ENCODE measurements at regions of chr1 and their contacts with region 1.

Region 1: DNA sequence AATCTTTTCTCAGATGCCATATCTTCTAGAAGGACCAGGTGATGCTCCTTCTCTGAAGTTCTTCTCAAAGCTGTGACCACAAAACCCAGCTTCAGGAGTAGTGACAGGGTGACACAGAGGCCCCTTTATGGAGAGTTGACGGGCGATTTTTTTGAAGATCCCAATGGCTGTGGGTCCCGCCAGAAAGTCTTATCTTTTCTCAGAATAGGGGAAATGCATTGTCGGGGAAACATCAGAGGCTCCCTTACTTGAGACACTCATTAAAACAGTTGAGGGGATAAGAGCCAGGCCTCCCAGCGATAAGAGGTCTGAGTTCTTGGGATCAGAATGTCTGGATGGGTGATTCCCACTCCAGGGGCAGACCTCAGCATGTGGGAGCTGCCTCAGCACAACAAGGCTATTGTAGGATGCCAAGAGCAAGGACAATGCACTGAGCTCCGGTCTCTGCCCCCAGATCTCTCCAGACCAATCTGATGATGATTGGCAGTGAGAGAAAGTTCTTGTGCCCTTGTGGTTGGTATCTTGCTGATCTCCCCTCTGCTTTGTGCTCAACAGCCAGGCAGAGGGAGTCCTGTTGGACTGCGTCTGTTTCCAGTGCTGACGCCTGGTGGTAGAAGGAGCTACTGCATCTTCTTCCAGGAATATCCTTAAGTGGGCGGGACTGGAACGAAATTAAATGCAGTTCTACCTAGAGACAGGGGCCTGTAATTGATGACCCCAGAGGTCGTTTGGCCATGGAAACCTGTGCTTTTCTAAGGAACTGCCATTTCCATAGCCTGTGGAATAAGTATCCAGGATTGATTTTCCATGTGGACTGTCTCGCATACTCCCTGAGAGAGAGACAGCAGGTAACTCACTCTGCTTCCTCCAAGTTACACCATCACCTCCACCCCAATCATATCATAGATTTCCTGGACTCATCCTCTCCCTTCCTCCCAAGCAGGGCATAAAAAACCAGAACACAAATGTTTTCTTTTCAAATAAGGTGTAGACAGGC is 6.8 kb upstream of the ACKR1 start:
- DNase-seq: peak; percentile 76
- ATAC-seq: peak; percentile 86
- H3K4me3 Mint-ChIP-seq: no peak overlapping the region
- H3K27ac Mint-ChIP-seq: no peak overlapping the region
- H3K4me1 Mint-ChIP-seq: peaks cover 16% of the 10 kb centered on the region
- H3K27me3 Mint-ChIP-seq: peaks cover 30% of the 10 kb centered on the region
- CTCF ChIP-seq: peak; percentile 80

Region 2: GRCh38 chr1:159161001-159161718 is 36.7 kb before region 1 on chr1:
- CTCF ChIA-PET with region 1: interaction called, 34 read pairs
- POLR2A ChIA-PET with region 1: no interaction called
- intact Hi-C with region 1: loop called (anchors 5 kb)
- DNase-seq: peak; percentile 68
- ATAC-seq: peak; percentile 80
- H3K4me3 Mint-ChIP-seq: no peak overlapping the region
- H3K27ac Mint-ChIP-seq: no peak overlapping the region
- H3K4me1 Mint-ChIP-seq: peaks cover 4% of the 10 kb centered on the region
- H3K27me3 Mint-ChIP-seq: peaks cover 35% of the 10 kb centered on the region
- CTCF ChIP-seq: peak; percentile 95